PC-3 (cell line): ENCODE measurements at regions of chr1 and their contacts with region 1.

Region 1: DNA sequence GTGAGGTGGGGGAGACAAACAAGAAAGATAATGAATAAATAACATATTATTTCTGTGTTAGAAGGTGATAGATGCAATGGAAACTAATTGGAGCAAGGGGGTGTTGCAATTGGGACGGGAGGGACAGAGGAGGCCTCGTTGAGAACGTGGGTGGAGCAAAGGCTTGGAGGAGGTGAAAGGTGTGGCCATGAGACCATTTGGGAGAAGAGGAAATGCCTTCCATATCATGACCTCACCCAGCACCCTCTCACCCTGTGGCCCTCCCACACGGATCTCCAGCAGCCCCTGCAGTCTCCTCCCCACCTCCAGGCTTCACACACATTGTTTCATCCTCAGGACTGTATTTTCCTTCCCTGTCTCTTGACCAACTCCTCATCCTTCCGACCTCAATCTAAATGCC is 85.3 kb upstream of the ARHGAP29 start:
- DNase-seq: peak; percentile 94
- ATAC-seq: peak; percentile 41
- H3K4me3 ChIP-seq: peak overlapping the region; percentile 51
- H3K27ac ChIP-seq: peak overlapping the region; percentile 98
- H3K4me1 ChIP-seq: peaks cover 83% of the 10 kb centered on the region
- H3K27me3 ChIP-seq: no peaks in the 10 kb centered on the region
- CTCF ChIP-seq: no peak

Region 2: DNA sequence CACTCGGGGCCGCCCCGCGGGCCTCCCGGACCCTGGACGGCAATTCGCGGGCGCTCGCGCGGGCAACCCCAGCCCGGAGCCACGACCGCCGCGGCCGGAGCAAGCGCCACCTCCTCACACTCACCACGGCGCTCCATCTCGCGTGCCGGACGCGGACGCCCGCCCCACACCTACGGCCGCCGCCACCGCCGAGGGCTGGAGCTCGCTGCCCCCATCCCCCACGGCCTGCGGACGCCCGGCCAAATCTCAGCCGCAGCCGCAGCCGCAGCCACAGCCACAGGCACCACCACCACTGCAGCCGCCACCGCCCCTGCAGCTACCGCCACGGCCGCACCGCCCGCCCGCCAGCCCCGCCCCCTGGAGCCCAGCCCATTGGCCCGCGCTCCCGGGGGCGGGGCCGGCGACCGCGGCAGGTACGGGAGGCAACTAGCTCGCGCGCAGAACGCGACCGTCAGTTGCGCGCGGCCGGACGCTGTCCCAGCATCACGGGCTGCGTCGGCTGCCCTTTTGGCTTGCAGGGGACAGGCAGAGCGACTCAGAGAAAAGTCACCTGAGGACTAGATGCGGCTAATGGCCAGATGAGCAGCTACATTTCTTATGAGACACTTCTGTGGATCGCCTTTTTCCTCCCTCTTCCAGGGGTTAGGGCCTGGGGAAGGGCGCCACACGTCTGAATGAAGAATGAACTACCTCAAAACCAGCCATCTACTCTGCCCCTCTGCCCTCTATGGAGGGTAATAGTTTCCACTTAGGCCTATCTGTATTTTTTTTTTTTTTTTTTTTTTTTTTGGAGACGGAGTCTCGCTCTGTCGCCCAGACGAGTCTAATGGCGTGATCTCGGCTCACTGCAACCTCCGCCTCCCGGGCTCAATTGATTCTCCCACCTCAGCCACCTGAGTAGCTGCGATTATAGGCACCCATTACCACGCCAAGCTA is 85.1 kb before region 1 on chr1 and contains the start of gene ARHGAP29:
- CTCF ChIA-PET with region 1: no interaction called
- POLR2A ChIA-PET with region 1: interaction called, 7 read pairs
- intact Hi-C with region 1: loop called (anchors 1 kb)
- DNase-seq: peak; percentile 94
- ATAC-seq: peak; percentile 72
- H3K4me3 ChIP-seq: peak within 1 kb of the TSS; percentile 96
- H3K27ac ChIP-seq: peak within 1 kb of the TSS; percentile 77
- H3K4me1 ChIP-seq: peaks cover 64% of the 10 kb centered on the region
- H3K27me3 ChIP-seq: no peaks in the 10 kb centered on the region
- CTCF ChIP-seq: no peak
- total RNA-seq, gene ARHGAP29: 161 and 166 TPM in 2 replicates

Region 3: GRCh38 chr1:94247138-94248094 is 75.3 kb before region 1 on chr1:
- CTCF ChIA-PET with region 1: no interaction called
- POLR2A ChIA-PET with region 1: interaction called, 11 read pairs
- intact Hi-C with region 1: loop called (anchors 1 kb)
- DNase-seq: peak; percentile 92
- ATAC-seq: peak; percentile 60
- H3K4me3 ChIP-seq: peak overlapping the region; percentile 96
- H3K27ac ChIP-seq: peak overlapping the region; percentile 92
- H3K4me1 ChIP-seq: peaks cover 41% of the 10 kb centered on the region
- H3K27me3 ChIP-seq: no peaks in the 10 kb centered on the region
- CTCF ChIP-seq: no peak

Region 4: GRCh38 chr1:94284476-94284875 is 38.2 kb before region 1 on chr1:
- CTCF ChIA-PET with region 1: no interaction called
- POLR2A ChIA-PET with region 1: no interaction called
- intact Hi-C with region 1: loop called (anchors 5 kb)
- DNase-seq: no peak
- ATAC-seq: no peak
- H3K4me3 ChIP-seq: no peak overlapping the region
- H3K27ac ChIP-seq: peak overlapping the region; percentile 48; the same call in 1 of the 2 replicates
- H3K4me1 ChIP-seq: peaks cover 49% of the 10 kb centered on the region
- H3K27me3 ChIP-seq: no peaks in the 10 kb centered on the region
- CTCF ChIP-seq: no peak

Region 5: GRCh38 chr1:94299627-94300552 is 22.8 kb before region 1 on chr1:
- CTCF ChIA-PET with region 1: no interaction called
- POLR2A ChIA-PET with region 1: interaction called, 3 read pairs
- intact Hi-C with region 1: loop called (anchors 1 kb)
- DNase-seq: peak; percentile 93
- ATAC-seq: peak; percentile 38
- H3K4me3 ChIP-seq: no peak overlapping the region
- H3K27ac ChIP-seq: peak overlapping the region; percentile 60
- H3K4me1 ChIP-seq: peaks cover 70% of the 10 kb centered on the region
- H3K27me3 ChIP-seq: no peaks in the 10 kb centered on the region
- CTCF ChIP-seq: no peak

Region 6: GRCh38 chr1:94305704-94306103 is 17.0 kb before region 1 on chr1:
- CTCF ChIA-PET with region 1: no interaction called
- POLR2A ChIA-PET with region 1: interaction called, 3 read pairs
- intact Hi-C with region 1: loop called (anchors 1 kb)
- DNase-seq: peak; percentile 76
- ATAC-seq: no peak
- H3K4me3 ChIP-seq: no peak overlapping the region
- H3K27ac ChIP-seq: peak overlapping the region; percentile 82
- H3K4me1 ChIP-seq: peaks cover 61% of the 10 kb centered on the region
- H3K27me3 ChIP-seq: no peaks in the 10 kb centered on the region
- CTCF ChIP-seq: no peak